Activated CD4-positive, alpha-beta T cell treated with anti-CD3 and anti-CD28 coated beads for 36 hours (primary cell): ENCODE measurements at regions of chr11 and their contacts with region 1.

Region 1: DNA sequence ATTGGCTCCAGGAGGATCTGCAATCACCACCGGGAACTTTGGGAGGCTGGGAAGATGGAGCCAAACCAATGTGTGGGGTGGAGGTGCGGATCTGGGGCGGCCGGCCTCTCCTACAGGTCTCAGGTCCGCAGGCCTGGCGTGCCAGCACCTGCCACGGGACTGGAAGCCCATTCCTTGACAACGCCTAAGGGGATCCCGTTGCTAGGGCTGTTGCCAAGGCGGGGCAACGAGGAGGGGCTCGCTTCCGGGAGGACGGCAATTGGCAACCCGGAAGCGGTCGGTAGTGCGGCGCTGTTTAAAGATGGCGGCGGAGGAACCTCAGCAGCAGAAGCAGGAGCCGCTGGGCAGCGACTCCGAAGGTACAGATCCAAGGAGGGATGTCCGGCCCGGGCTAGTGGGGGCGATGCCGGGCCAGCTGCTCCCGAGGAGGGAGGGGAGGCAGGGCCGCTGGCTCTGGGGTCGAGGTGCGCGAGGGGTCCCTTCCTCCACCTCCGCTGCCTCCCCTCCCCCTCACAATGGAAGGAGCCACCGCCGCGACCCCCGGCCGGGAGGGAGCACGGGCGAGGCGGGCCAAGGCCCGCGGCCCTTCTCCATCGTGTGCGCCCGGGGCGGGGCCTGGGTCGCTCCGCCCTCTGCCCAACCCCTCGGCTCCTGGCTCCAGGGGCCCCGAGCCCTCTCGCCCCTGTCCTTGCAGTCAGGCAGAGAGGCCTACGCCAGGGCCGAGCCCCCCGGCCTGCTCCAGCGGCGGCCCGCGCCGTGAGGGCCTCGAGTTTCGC is at the start of gene OTUB1:
- DNase-seq: peak; percentile 94
- ATAC-seq: peak; percentile 92
- H3K4me3 Mint-ChIP-seq: peak within 1 kb of the TSS; percentile 93
- H3K27ac Mint-ChIP-seq: peak within 1 kb of the TSS; percentile 89
- H3K4me1 Mint-ChIP-seq: peaks cover 23% of the 10 kb centered on the region
- H3K27me3 Mint-ChIP-seq: no peaks in the 10 kb centered on the region
- total RNA-seq, gene OTUB1: 77.4 to 86.1 TPM

Region 2: DNA sequence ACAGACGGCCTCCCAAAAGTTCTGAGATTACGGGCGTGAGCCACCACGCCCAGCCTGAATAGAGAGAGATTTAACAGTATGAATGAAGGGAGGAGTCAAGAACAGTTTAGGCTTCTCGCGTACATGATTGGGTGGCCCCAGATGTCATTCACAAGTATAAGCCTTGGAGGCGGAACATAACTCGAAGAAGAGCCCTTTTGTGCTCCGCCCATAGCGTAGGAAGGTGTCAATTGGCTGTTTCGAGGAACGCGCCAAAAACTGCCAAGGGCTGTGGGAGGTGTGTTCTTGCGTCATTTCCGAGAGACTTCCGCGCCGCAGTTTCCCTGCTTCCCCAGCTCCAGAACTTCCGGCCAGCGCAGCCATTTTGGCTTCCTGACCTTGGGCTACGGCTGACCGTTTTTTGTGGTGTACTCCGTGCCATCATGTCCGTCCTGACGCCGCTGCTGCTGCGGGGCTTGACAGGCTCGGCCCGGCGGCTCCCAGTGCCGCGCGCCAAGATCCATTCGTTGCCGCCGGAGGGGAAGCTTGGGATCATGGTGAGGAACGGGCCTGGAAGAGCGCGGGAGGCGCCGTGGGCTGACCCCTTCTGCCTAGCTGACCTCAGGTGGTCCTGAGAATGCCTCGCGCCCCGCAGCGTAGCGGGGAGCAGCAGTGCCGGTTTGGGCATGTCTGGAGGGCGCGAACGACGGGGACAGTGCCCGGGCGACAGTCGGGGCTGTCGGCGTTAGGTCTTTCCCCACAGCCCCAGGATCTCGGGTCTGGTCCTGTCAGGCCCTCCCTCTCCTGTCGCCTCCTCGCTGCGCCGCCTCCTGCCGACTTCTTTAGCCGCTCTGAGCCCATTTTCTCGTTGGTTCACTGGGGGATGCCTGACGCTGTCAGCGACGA is 11.8 kb before region 1 on chr11 and contains the start of gene COX8A:
- CTCF ChIA-PET with region 1: no interaction called
- POLR2A ChIA-PET with region 1: interaction called, 5 read pairs
- intact Hi-C with region 1: loop called (anchors 1 kb)
- DNase-seq: peak; percentile 97
- ATAC-seq: peak; percentile 100
- H3K4me3 Mint-ChIP-seq: peak within 1 kb of the TSS; percentile 95
- H3K27ac Mint-ChIP-seq: peak within 1 kb of the TSS; percentile 97
- H3K4me1 Mint-ChIP-seq: peaks cover 20% of the 10 kb centered on the region
- H3K27me3 Mint-ChIP-seq: no peaks in the 10 kb centered on the region
- total RNA-seq, gene COX8A: 413 to 454 TPM

Region 3: DNA sequence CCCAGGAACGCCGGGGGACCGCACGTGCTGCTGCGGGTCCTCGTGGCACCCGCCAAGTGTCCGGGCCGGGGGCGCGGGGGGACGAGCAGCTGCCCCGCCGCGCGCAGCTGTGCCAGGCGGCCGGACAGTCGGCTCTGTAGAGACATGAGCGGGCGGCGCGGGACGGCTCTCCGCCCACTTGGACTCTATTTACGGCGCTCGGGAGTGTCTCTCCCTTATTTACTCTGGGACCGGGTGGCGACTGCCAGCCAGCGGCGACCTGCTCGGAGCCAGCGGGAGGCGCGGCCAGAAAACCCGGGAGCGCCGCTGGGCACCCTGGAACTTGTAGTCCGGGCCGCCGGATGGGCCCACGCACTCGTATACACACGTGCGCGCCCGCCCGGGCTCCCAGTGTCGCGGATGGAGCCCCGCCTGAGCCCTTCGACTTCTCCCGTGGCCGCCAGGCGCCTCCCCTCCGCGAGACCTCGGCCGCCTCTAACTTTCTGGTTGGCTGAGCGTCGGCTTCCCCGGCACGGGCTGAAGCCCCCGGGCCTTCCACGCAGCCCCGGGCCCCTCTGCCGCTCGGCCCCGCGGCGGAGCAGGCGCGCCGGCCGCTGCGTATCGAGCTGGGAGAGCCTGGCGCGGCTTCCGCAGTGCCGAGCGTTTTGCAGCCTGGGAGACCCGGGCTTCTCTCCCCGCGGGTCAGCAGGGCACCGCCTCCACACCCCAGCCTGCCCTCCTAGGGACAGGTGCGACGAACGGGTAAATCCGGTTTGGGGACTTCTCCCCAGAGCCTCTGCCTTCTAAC is 179.7 kb after region 1 on chr11 and contains the start of gene MACROD1:
- CTCF ChIA-PET with region 1: no interaction called
- POLR2A ChIA-PET with region 1: no interaction called
- intact Hi-C with region 1: loop called in 1 of 2 experiments (anchors 5 kb)
- DNase-seq: peak; percentile 92
- ATAC-seq: peak; percentile 94
- H3K4me3 Mint-ChIP-seq: peak within 1 kb of the TSS; percentile 92
- H3K27ac Mint-ChIP-seq: peak within 1 kb of the TSS; percentile 83
- H3K4me1 Mint-ChIP-seq: peaks cover 9% of the 10 kb centered on the region
- H3K27me3 Mint-ChIP-seq: no peaks in the 10 kb centered on the region
- total RNA-seq, gene MACROD1: 26.4 to 28.6 TPM